K562 (cell line): ENCODE measurements at regions of chr7 and their contacts with region 1.

Region 1: DNA sequence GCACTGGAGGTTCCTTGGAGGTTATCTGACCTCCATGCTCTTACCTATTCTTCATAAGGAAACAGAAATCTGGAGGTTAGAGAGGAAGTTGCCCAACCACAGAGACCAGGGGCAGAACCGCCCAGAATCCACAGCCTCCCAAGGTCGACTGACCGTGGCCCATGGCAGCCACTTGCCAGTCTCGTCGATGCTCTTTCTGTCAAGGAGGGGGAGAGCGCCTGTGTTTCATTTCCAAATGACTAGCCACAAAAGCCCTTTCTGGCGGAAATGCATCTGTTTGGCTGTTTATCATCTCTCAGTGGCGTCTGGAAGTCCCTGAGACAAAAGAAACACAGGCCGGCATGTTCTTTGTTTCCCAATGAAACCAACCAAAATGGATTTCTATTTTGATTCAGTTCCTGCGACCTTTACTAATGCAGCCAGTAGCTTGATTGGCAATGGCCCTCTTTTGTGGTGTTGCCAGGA is 2.9 kb downstream of the RAMP3 start:
- DNase-seq: no peak
- ATAC-seq: no peak
- H3K4me3 ChIP-seq: no peak overlapping the region
- H3K27ac ChIP-seq: no peak overlapping the region
- H3K4me1 ChIP-seq: peaks cover 0 to 11% of the 10 kb centered on the region in 2 experiments; a peak in 1 of 5 replicates
- H3K27me3 ChIP-seq: peaks cover 23 to 58% of the 10 kb centered on the region in 2 experiments
- CTCF ChIP-seq: no peak
- EP300 ChIP-seq: no peak
- POLR2A ChIP-seq: no peak
- RAD21 ChIP-seq: no peak

Region 2: DNA sequence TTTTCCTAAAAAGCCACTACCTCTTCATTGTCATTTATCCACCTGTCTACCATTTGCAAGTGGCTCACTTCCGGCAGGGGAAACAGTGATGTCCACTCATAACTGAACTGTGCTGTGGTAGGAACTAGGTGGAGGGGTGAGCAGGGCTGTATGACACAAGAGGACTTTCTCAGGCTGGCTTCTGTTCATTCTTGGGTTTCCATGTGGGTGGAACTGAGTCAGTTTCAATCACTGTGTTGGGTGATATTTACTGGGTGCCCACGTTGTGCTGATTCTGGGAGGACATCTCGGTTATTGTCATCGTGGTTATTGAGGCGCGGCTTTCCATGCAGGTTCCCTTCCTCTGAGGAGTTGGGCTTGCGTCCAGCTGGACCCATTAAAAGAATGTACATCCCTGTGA is 35.9 kb after region 1 on chr7:
- CTCF ChIA-PET with region 1: no interaction called
- POLR2A ChIA-PET with region 1: no interaction called
- in situ Hi-C with region 1: no loop called
- intact Hi-C with region 1: no loop called
- DNase-seq: no peak
- ATAC-seq: no peak
- H3K4me3 ChIP-seq: no peak overlapping the region
- H3K27ac ChIP-seq: no peak overlapping the region
- H3K4me1 ChIP-seq: no peaks in the 10 kb centered on the region
- H3K27me3 ChIP-seq: peaks cover 3 to 32% of the 10 kb centered on the region in 2 experiments; a peak in 4 of 5 replicates
- CTCF ChIP-seq: no peak
- EP300 ChIP-seq: no peak
- POLR2A ChIP-seq: no peak
- RAD21 ChIP-seq: no peak

Region 3: DNA sequence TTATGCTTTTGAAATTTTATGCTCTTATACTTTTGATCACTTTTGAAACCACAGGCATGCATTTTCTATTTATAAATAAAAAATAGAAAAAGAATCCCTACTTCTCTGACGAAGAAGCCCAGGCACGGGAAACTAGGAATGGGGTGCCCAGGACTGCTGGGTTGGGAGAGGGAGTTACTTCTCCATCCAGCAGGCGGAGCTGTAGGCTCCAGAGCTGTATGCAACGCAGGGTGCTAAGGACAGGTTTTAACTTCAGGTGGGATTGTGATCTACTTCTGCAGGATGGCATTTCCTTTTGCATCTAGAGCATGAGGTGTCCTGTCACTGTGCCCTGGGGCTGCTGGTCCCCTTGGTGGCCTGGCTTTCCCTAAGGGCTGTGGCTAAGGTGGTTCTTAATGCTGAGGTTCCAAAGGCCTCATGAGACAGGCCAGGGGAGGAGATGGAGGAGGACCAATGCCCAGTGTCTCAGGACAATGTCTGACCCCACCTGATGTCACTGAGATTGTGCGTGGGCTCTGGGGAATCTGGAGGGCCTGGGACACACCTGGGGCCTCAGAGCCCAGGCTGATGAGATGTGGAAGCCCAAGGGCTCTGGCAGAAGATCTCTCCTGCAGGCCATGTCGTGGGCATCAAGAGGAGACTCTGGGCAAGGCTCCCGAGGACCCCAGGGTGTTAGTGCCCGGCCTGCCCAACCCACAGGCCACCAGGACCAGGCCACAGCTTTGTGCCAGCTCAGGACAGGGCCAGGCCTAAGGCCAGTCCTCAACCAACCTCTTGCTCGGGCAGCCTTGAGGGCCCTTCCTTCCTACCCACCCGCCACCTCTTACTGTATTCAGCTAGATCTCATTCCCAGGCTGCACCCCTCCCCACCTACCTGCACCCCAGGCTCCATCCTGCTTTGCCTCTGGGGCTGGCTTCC is 711.9 kb after region 1 on chr7:
- CTCF ChIA-PET with region 1: no interaction called
- POLR2A ChIA-PET with region 1: interaction called, 3 read pairs
- in situ Hi-C with region 1: loop called (anchors 25 kb)
- intact Hi-C with region 1: no loop called
- DNase-seq: peak; percentile 30 to 57 (median 44)
- ATAC-seq: peak; percentile 94
- H3K4me3 ChIP-seq: no peak overlapping the region
- H3K27ac ChIP-seq: no peak overlapping the region
- H3K4me1 ChIP-seq: no peaks in the 10 kb centered on the region; a peak in 1 of 5 replicates
- H3K27me3 ChIP-seq: no peaks in the 10 kb centered on the region
- CTCF ChIP-seq: peak; percentile 59 to 80 (median 68)
- EP300 ChIP-seq: no peak
- POLR2A ChIP-seq: no peak
- RAD21 ChIP-seq: peak in 1 of 2 experiments; percentile 47; a peak in 3 of 4 replicates